Sciatic nerve (tissue), 2 donors: ENCODE measurements at regions of chr7 and their contacts with region 1.

Region 1: DNA sequence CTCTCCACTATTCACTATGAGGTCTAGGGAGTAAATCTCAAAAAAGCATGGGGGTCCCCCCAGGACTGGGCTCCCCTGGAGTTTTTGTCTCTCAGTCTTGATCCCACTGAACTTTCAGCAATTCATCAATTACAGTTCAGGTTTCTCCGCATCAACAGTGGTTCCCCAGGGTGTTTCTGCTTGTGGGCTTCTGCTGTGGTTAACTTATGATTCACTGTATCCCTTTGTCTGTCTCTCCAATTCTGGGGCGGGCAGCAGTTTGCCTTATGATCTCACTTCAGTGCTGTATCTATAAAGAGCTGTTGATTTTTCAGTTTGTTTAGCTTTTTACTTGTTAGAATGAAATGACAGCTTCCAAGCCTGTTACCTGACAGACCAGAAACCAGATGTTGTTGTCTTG is 142.6 kb upstream of the CDC14C start:
- DNase-seq: no peak
- ATAC-seq: no peak

Region 2: DNA sequence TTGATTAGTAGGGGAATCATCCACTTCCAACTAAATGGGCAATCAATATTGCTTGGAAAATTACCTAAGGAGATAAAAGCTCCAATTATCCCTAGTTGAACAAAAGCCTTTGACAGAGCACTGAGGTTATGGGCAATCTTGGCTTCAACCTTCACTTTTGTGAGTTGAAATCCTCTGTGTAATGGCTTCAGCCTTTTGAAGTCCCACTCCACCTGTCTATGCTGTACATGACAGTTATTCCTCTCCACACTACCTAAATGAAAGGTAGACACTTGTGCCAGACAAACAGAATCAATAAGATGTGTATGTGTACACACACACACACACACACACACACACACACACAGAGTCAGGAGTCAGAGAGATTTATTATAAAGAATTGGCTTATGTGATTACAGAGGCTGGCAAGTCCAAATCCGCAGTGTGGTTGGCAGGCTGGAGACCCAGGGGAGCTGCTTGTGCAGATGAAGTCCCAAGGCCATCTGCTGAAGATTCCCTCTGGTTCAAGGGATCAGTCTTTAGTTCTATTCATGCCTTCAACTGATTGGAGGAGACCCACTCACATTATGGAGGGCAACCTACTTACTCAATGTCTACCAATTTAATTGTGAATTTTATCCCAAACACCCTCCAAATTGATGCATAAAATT is 22.2 kb before region 1 on chr7:
- intact Hi-C with region 1: loop called (anchors 1 kb)
- DNase-seq: no peak
- ATAC-seq: no peak

Region 3: GRCh38 chr7:49264530-49264929 is 482.7 kb after region 1 on chr7:
- intact Hi-C with region 1: no loop called
- DNase-seq: no peak
- ATAC-seq: no peak